ENCODE measurements at regions of chr14 and their contacts with region 1.

Region 1: GRCh38 chr14:49461529-49462401 is 124.4 kb downstream of the RPS29 start:
- DNase-seq: peak; percentile 82
- ATAC-seq: peak; percentile 93
- H3K4me3 Mint-ChIP-seq: no peak overlapping the region
- H3K27ac Mint-ChIP-seq: no peak overlapping the region
- H3K4me1 Mint-ChIP-seq: no peaks in the 10 kb centered on the region
- H3K27me3 Mint-ChIP-seq: no peaks in the 10 kb centered on the region
- CTCF ChIP-seq: peak; percentile 82

Region 2: DNA sequence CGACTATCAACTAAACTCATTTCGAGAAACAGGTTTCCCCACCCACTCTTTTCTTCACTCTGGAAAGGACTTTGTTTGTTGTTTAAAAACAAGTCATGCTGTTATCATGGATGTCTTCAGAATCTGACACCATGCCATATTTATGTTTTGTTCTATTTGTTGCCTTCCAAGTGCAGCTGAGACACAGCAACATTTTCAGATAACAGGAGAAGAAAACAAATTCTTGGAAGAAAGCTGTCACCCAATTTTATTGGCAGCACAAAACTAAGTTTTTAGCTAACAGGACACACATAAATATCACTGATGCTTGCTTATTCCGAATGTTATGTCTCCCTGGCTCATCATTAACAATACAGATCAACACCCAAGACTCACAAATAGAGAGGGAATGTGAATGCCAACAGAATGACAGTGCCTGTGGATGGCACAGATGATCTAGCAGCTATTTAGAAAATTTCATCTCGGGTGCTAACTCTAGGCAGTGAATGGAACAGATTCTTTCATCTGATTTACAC is 23.5 kb before region 1 on chr14:
- CTCF ChIA-PET with region 1: interaction called, 15 read pairs
- POLR2A ChIA-PET with region 1: no interaction called
- intact Hi-C with region 1: no loop called
- DNase-seq: no peak
- ATAC-seq: no peak
- H3K4me3 Mint-ChIP-seq: no peak overlapping the region
- H3K27ac Mint-ChIP-seq: no peak overlapping the region
- H3K4me1 Mint-ChIP-seq: no peaks in the 10 kb centered on the region
- H3K27me3 Mint-ChIP-seq: peaks cover 4% of the 10 kb centered on the region
- CTCF ChIP-seq: no peak

Region 3: DNA sequence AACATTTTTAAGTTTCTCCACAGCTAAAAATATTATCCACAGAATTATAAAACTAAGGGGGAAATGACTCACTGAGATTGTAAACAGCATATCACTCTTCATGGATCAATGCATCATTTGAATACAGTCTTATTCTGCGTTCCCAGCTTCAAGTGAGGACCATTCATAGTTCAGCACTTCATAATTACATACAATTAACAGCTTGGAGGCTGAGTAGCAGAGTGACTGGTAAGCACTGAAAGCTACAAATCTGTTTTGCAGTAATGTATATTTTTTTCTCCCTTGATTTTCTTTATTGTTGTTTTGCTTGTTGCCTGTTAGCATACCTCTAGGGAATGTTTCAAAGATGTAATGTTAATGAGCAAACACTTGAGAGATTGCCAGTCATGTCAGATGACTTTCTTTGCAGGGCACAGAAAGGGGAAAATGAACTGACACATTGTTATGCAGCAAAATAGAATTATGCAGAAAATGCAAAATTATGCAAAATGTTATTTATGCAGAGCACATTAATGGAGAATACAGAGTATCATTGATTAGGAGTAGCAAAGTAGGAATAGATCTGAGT is 14.1 kb before region 1 on chr14:
- CTCF ChIA-PET with region 1: interaction called, 29 read pairs
- POLR2A ChIA-PET with region 1: no interaction called
- intact Hi-C with region 1: no loop called
- DNase-seq: no peak
- ATAC-seq: no peak
- H3K4me3 Mint-ChIP-seq: no peak overlapping the region
- H3K27ac Mint-ChIP-seq: no peak overlapping the region
- H3K4me1 Mint-ChIP-seq: no peaks in the 10 kb centered on the region
- H3K27me3 Mint-ChIP-seq: peaks cover 6% of the 10 kb centered on the region
- CTCF ChIP-seq: no peak

Region 4: GRCh38 chr14:49483268-49483667 is 21.5 kb after region 1 on chr14:
- CTCF ChIA-PET with region 1: interaction called, 16 read pairs
- POLR2A ChIA-PET with region 1: no interaction called
- intact Hi-C with region 1: no loop called
- DNase-seq: no peak
- ATAC-seq: no peak
- H3K4me3 Mint-ChIP-seq: no peak overlapping the region
- H3K27ac Mint-ChIP-seq: no peak overlapping the region
- H3K4me1 Mint-ChIP-seq: peaks cover 5% of the 10 kb centered on the region
- H3K27me3 Mint-ChIP-seq: no peaks in the 10 kb centered on the region
- CTCF ChIP-seq: no peak

Region 5: DNA sequence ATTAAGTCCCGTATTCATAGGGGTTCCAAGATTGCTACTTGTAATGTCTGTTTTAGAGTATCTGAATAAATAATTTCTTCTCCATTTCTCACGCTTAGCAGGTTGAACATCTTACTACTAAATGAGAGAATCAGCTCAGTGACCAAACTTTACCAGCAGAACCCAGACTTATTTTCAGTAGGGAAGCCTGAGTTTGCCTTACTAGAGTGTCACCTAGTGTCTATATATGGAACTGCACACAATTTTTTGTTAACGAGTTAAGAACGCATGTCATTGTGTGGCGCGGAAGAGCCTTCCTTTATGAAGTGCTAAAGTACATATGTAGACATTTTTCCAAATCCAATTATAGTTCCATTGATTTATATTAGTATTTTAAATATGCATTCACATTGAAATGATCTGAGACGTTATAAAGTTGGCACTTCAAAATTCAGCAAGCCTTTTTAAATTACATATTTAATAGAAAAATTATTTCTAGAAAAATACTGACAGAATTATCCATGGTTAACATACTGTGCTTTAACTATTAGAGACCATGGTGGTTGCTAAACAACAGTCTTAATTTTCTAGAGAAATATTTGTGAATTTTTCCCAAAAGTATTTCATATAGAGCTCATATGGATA is 36.1 kb after region 1 on chr14:
- CTCF ChIA-PET with region 1: interaction called, 164 read pairs
- POLR2A ChIA-PET with region 1: no interaction called
- intact Hi-C with region 1: loop called (anchors 2 kb)
- DNase-seq: peak; percentile 14
- ATAC-seq: peak; percentile 79
- H3K4me3 Mint-ChIP-seq: no peak overlapping the region
- H3K27ac Mint-ChIP-seq: no peak overlapping the region
- H3K4me1 Mint-ChIP-seq: no peaks in the 10 kb centered on the region
- H3K27me3 Mint-ChIP-seq: peaks cover 9% of the 10 kb centered on the region
- CTCF ChIP-seq: peak; percentile 87

Measured in activated CD8-positive, alpha-beta T cell treated with anti-CD3 and anti-CD28 coated beads for 36 hours (primary cell).